Activated naive CD4-positive, alpha-beta T cell treated with anti-CD3 and anti-CD28 coated beads for 36 hours (primary cell): ENCODE measurements at regions of chr6 and their contacts with region 1.

Region 1: GRCh38 chr6:117482240-117483003 is at the start of gene DCBLD1:
- DNase-seq: peak; percentile 56
- H3K4me3 Mint-ChIP-seq: peak within 1 kb of the TSS; percentile 79
- H3K27ac Mint-ChIP-seq: no peak within 1 kb of the TSS
- H3K4me1 Mint-ChIP-seq: peaks cover 17% of the 10 kb centered on the region
- H3K27me3 Mint-ChIP-seq: peaks cover 42% of the 10 kb centered on the region
- total RNA-seq, gene DCBLD1: 1.1 to 1.4 TPM

Region 2: GRCh38 chr6:117265410-117266256 is 216.8 kb before region 1 on chr6 and contains the start of gene VGLL2:
- CTCF ChIA-PET with region 1: no interaction called
- intact Hi-C with region 1: loop called (anchors 5 kb)
- DNase-seq: no peak
- H3K4me3 Mint-ChIP-seq: peak within 1 kb of the TSS; percentile 51
- H3K27ac Mint-ChIP-seq: no peak within 1 kb of the TSS
- H3K4me1 Mint-ChIP-seq: peaks cover 8% of the 10 kb centered on the region
- H3K27me3 Mint-ChIP-seq: peaks cover 85% of the 10 kb centered on the region
- total RNA-seq, gene VGLL2: not detected

Region 3: GRCh38 chr6:117463762-117464665 is 18.4 kb before region 1 on chr6:
- CTCF ChIA-PET with region 1: no interaction called
- intact Hi-C with region 1: loop called (anchors 1 kb)
- DNase-seq: peak; percentile 55
- H3K4me3 Mint-ChIP-seq: no peak overlapping the region
- H3K27ac Mint-ChIP-seq: peak overlapping the region; percentile 54
- H3K4me1 Mint-ChIP-seq: peaks cover 13% of the 10 kb centered on the region
- H3K27me3 Mint-ChIP-seq: peaks cover 20% of the 10 kb centered on the region

Region 4: GRCh38 chr6:117547688-117548621 is 65.5 kb after region 1 on chr6:
- CTCF ChIA-PET with region 1: interaction called, 8 read pairs
- intact Hi-C with region 1: loop called (anchors 1 kb)
- DNase-seq: peak; percentile 52
- H3K4me3 Mint-ChIP-seq: peak overlapping the region; percentile 67
- H3K27ac Mint-ChIP-seq: no peak overlapping the region
- H3K4me1 Mint-ChIP-seq: peaks cover 37% of the 10 kb centered on the region
- H3K27me3 Mint-ChIP-seq: peaks cover 6% of the 10 kb centered on the region

Region 5: DNA sequence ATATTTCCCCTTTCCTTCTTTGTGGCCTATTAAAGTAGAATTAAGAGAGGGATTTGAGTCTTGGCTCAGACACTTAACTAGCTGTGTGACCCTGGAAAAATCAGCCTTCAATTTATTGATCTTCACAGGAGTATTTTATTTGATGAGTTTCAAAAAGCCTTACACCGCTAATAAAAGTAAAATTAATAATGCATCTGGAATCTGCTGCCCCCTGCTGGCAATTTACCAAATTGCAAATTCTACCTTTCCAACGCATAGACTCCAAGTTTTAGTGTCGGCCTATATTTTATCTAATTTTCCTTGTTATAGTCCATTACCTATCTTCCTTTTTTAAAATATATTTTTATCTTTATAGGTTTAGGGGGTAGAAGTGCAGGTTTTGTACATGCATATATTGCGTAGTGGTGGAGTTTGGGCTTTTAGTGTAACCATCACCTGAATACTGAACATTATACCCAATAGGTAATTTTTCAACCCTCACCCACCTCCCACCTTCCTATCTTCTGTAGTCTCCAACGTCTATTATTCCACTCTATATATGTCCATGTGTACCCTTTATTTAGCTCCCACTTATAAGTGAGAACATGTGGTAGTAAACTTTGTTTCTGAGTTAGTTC is 73.6 kb after region 1 on chr6:
- CTCF ChIA-PET with region 1: interaction called, 8 read pairs
- intact Hi-C with region 1: loop called (anchors 1 kb)
- DNase-seq: peak; percentile 78
- H3K4me3 Mint-ChIP-seq: no peak overlapping the region
- H3K27ac Mint-ChIP-seq: no peak overlapping the region
- H3K4me1 Mint-ChIP-seq: peaks cover under 1% of the 10 kb centered on the region
- H3K27me3 Mint-ChIP-seq: peaks cover 2% of the 10 kb centered on the region